ENCODE measurements at regions of chr1 and their contacts with region 1.

Region 1: DNA sequence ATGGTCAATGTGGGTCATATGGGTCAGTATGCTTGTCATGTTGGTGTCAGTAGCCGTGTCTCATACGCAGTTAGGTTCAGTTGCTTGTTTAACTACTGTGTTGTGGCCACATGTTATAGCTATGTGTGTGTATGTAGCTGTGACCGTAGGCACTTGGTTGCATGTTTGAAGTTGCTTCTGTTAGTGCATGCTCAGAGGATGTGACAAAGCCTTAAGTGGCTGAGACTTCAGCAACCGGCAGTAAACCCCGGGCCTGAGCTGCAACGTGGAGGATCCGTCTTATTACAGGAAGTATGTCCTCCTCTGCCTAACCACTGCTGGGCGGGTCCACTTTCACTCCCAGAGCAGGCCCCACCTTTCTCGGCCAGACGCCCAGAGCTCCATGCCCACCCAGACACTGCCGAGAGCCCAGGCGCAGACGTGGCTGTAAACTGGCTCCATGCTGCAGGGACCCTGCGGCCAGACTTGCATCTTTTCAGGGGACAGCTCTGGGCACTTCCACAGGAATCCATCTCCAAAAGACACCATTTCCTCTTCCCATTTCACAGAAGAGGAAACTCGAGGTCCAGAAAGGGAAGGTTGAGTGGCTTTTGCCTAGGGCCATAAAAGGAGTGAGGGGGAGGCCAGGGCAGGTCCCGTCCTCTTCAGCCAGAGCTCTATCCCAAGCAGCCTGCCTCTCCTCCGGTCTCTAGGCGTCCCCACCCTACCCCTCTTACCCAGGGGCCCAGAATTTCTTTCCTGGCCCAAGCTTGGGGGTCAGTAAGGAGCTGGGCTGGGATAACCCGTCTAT is 2.1 kb downstream of the TCEA3 start:
- DNase-seq: peak; percentile 55
- H3K4me3 Mint-ChIP-seq: no peak overlapping the region
- H3K27ac Mint-ChIP-seq: peak overlapping the region; percentile 10
- H3K4me1 Mint-ChIP-seq: peaks cover 21% of the 10 kb centered on the region
- H3K27me3 Mint-ChIP-seq: peaks cover 34% of the 10 kb centered on the region

Region 2: DNA sequence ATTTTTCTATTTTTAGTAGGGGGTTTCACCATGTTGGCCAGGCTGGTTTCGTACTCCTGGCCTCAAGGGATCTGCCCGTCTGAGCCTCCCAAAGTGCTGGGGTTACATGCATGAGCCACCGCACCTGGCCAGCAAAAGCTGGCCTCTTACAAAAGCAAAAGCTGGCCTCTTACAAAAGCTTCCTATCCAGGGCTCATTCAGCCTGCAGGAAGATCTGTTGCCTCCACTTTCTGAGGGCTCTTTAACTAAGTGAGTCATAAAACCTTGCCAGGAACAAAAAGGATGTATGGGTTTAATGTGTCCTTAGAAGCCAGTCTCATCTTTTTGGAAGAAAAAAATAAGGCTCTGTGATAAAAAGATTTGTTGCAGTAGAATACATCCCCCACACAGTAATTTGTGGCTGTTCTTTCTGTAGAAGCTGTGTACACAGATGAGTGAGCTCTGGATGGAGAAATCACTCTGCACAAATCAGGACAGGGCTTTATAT is 220.1 kb before region 1 on chr1:
- intact Hi-C with region 1: no loop called
- DNase-seq: no peak
- H3K4me3 Mint-ChIP-seq: no peak overlapping the region
- H3K27ac Mint-ChIP-seq: no peak overlapping the region
- H3K4me1 Mint-ChIP-seq: no peaks in the 10 kb centered on the region
- H3K27me3 Mint-ChIP-seq: peaks cover 4% of the 10 kb centered on the region

Region 3: DNA sequence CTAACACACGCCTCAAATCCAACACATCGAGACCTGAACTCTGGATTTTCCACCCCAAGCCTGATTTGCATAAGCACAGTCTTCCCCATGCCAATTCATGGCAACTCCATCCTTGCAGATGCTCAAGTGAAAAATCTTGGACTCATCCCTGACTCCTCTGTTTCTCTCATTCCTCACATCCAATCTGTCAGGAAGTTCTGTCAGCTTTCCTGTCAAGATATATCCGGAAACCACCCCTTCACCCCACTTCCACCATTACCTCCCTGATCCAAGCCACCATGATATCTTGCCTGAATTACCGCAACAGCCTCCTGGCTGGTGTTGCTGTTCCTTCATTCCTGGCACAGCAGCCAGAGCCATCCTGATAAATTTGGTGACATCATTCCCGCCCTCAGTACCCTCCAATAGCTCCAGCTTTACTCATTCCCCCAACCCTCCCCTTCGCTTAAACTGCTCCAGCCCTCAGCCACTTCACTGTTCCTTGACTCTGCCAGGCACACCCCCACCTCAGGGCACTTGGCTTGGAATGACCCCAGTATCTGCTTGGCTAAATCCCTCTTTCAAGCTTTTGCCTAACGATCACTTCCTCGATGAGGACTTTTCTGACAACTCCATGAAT is 15.3 kb before region 1 on chr1:
- intact Hi-C with region 1: no loop called
- DNase-seq: no peak
- H3K4me3 Mint-ChIP-seq: no peak overlapping the region
- H3K27ac Mint-ChIP-seq: no peak overlapping the region
- H3K4me1 Mint-ChIP-seq: peaks cover 11% of the 10 kb centered on the region
- H3K27me3 Mint-ChIP-seq: no peaks in the 10 kb centered on the region

Region 4: DNA sequence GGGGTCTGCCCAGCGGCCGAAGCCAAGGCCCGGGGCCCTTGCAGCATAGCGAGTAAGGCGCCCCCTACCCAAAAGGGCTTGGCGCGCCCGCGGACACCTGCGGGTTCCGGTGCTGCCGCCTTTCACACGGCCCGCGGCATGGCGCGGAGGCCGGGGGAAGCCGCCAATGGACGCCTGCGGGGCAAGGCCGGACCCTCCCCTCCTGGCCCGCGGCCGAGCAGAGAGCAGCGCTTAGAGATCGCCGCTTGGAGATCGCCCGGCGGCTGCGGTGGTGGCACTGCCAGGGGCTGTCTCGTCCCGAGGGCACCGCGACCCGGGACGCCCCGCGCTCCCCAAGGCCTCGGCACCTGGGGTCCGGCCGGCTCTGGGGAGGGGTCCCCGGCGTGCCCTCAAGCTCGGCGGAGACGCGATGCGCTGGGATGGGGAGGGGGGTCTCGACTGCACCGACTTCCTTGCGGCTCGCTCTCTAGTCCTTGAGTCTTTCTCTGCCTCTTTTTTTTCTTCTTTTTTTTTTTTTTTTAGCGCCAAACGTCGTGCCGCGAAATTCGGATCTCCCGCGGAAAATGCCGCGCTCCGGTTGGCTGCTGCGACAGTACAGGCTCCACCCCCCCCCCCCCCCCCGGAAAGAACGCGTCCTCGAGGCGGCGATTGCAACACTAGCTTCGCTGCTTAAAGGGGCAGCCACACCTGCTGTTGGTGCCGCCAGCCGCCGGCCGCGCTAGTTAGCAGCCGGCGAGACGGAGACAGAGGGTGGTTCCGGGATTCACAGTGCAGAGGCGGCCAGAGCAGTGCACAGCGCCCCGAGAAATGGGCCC is 108.5 kb after region 1 on chr1 and contains the start of gene E2F2:
- intact Hi-C with region 1: loop called (anchors 5 kb)
- DNase-seq: peak; percentile 78
- H3K4me3 Mint-ChIP-seq: peak within 1 kb of the TSS; percentile 95
- H3K27ac Mint-ChIP-seq: peak within 1 kb of the TSS; percentile 96
- H3K4me1 Mint-ChIP-seq: peaks cover 67% of the 10 kb centered on the region
- H3K27me3 Mint-ChIP-seq: no peaks in the 10 kb centered on the region
- total RNA-seq, gene E2F2: 17.2 and 18.6 TPM in 2 replicates

Measured in activated T-helper 2 cell treated with anti-CD3 and anti-CD28 coated beads, Interferon-gamma antibody, Interleukin-2, Interleukin-4, amounts not matched to agents 10 μg/mL and 5 μg/mL and 100 μg/mL, durations not matched to agents 14 hours and 24 hours and 36 hours (primary cell).